Motor neuron (in vitro differentiated cells): ENCODE measurements at regions of chr5 and their contacts with region 1.

Region 1: GRCh38 chr5:54517174-54518092 is at the start of gene SNX18:
- ATAC-seq: peak; percentile 74 to 91 (median 86)
- H3K4me3 ChIP-seq: peak within 1 kb of the TSS; percentile 67 to 90 (median 87)
- H3K27ac ChIP-seq: peak within 1 kb of the TSS; percentile 82 to 89
- H3K4me1 ChIP-seq: peaks cover 27% of the 10 kb centered on the region in 2 donors
- total RNA-seq, gene SNX18: 12.4 to 26.2 (median 17.0) TPM

Region 2: GRCh38 chr5:54743997-54744788 is 226.8 kb after region 1 on chr5:
- in situ Hi-C with region 1: loop called in 1 of 9 experiments (anchors 25 kb)
- ATAC-seq: peak; percentile 17 to 83 (median 76)
- H3K4me3 ChIP-seq: no peak overlapping the region
- H3K27ac ChIP-seq: no peak overlapping the region
- H3K4me1 ChIP-seq: peaks cover 21% of the 10 kb centered on the region in 2 donors

Region 3: GRCh38 chr5:54844905-54845566 is 327.6 kb after region 1 on chr5:
- in situ Hi-C with region 1: loop called in 7 of 9 experiments (anchors 10 to 25 kb)
- ATAC-seq: peak in 5 of 8 experiments; percentile 27 to 77 (median 67)
- H3K4me3 ChIP-seq: no peak overlapping the region
- H3K27ac ChIP-seq: no peak overlapping the region
- H3K4me1 ChIP-seq: peaks cover 3 to 10% of the 10 kb centered on the region in 2 donors

Region 4: DNA sequence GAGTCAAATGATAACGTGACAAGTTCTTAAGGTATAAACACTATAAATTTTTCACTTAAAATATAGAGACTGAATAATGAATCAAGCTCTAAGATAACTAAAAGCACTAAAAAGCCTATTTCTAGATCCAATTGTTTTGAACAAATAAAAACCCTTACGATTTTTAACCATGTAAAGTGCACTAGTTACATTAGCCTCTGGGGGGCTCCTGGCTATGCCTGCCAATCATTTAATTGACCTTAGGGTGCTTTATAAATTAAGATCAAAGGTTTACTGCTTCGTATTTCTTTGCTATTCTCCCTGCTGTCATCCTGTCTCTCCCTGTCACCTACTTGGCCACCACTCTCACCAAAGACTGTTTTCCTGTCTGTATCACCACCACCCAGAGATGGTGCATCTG is 334.6 kb after region 1 on chr5:
- in situ Hi-C with region 1: loop called in 7 of 9 experiments (anchors 10 to 25 kb)
- ATAC-seq: no peak
- H3K4me3 ChIP-seq: no peak overlapping the region
- H3K27ac ChIP-seq: no peak overlapping the region
- H3K4me1 ChIP-seq: no peaks in the 10 kb centered on the region

Region 5: GRCh38 chr5:54867310-54867944 is 350.0 kb after region 1 on chr5:
- in situ Hi-C with region 1: loop called in 4 of 9 experiments (anchors 25 kb)
- ATAC-seq: peak in 3 of 8 experiments; percentile 42 to 70 (median 64)
- H3K4me3 ChIP-seq: no peak overlapping the region
- H3K27ac ChIP-seq: no peak overlapping the region
- H3K4me1 ChIP-seq: no peaks in the 10 kb centered on the region

Region 6: GRCh38 chr5:55146543-55147151 is 629.2 kb after region 1 on chr5:
- in situ Hi-C with region 1: loop called in 1 of 9 experiments (anchors 25 kb)
- ATAC-seq: peak; percentile 46 to 97 (median 94)
- H3K4me3 ChIP-seq: no peak overlapping the region
- H3K27ac ChIP-seq: no peak overlapping the region
- H3K4me1 ChIP-seq: no peaks in the 10 kb centered on the region

Region 7: DNA sequence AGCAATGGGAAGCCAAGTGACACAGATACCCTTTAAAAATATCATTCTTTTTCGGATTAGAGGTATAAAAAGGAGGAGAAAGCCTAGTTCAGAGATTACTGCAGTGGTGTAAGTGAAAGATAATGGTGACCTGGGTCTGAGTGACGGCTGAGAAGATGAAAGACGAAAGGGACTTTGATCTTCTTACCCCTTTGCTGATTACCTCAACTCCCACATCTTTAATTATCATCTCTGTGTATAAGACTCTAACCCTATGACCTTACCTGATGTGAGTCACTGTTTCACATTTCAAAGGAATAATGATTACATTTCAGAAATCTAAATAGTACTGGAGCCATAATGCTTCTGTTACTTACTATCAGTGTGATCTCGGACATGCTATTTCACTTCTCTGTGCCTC is 737.4 kb after region 1 on chr5:
- in situ Hi-C with region 1: no loop called
- ATAC-seq: no peak
- H3K4me3 ChIP-seq: no peak overlapping the region
- H3K27ac ChIP-seq: no peak overlapping the region
- H3K4me1 ChIP-seq: no peaks in the 10 kb centered on the region